Prostate gland (tissue), 2 donors: ENCODE measurements at regions of chrX and their contacts with region 1.

Region 1: DNA sequence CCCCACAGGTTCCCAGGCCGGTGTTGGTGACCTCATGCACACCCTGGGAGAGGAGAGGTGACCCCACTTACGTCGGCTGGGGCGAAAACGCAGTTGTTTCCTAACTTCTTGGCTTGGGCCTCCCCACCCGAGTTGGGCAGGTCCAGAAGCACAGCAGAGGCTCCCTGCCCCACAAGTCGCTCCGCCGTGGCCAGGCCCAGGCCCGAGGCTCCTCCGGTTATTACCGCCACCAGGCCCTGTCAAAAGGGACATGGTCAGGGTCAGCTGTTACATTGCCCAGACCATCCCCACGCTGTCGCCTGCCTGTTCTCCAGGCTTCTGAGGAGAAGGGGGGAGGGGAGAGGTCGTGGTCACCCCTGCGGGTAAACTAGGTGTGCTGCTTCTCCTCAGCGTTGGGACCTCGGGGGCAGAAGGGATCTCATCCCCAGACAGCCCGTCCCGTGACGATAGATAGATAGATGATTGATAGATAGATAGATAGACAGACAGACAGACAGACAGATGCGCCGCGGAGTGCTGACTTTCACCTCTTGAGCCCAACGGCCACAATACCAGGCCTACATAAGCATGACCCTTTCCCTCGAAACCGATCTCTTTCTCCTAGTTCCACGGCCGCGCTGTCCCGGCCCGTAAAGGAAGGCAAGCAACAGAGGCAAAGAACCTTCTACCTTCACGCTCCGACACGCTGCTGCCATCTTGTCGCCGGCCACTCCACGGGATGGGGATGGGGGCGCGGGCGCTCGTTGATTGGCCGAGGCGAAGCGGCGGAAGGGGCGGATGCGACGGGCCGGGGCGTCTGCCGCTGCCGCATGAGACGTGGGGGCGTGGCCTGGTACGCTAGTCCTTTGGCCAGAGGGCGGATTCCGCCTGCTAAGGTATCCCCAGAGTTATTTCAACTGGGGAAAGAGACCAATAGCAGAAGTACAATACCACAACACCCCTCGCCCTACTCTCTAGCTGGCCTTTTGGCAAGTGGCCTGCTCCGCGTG is at the start of gene HSD17B10:
- DNase-seq: peak; percentile 84
- H3K4me3 ChIP-seq: peak within 1 kb of the TSS; percentile 44 to 51
- H3K27ac ChIP-seq: no peak within 1 kb of the TSS
- H3K4me1 ChIP-seq: no peaks in the 10 kb centered on the region
- H3K27me3 ChIP-seq: no peaks in the 10 kb centered on the region
- CTCF ChIP-seq: peak in 1 of 4 experiments; percentile 3
- POLR2A ChIP-seq: no peak
- total RNA-seq, gene HSD17B10: 70.6 to 83.4 TPM

Region 2: GRCh38 chrX:53284684-53285447 is 149.1 kb before region 1 on chrX:
- intact Hi-C with region 1: loop called (anchors 10 kb)
- DNase-seq: peak; percentile 15
- H3K4me3 ChIP-seq: no peak overlapping the region
- H3K27ac ChIP-seq: no peak overlapping the region
- H3K4me1 ChIP-seq: peaks cover 4% of the 10 kb centered on the region
- H3K27me3 ChIP-seq: no peaks in the 10 kb centered on the region
- CTCF ChIP-seq: peak in 3 of 4 experiments; percentile 44 to 66 (median 56)
- POLR2A ChIP-seq: no peak

Region 3: GRCh38 chrX:53312946-53313727 is 120.8 kb before region 1 on chrX:
- intact Hi-C with region 1: loop called (anchors 5 kb)
- DNase-seq: peak; percentile 36
- H3K4me3 ChIP-seq: no peak overlapping the region
- H3K27ac ChIP-seq: no peak overlapping the region
- H3K4me1 ChIP-seq: no peaks in the 10 kb centered on the region
- H3K27me3 ChIP-seq: no peaks in the 10 kb centered on the region
- CTCF ChIP-seq: peak in 3 of 4 experiments; percentile 62 to 66 (median 63)
- POLR2A ChIP-seq: no peak